Aorta (tissue), 5 donors: ENCODE measurements at regions of chr12 and their contacts with region 1.

Region 1: GRCh38 chr12:23197266-23197665 is 572.3 kb downstream of the ETNK1 start:
- DNase-seq: no peak
- ATAC-seq: peak; percentile 84
- H3K4me3 ChIP-seq: peak overlapping the region in 1 of 2 donors; percentile 10
- H3K27ac ChIP-seq: peak overlapping the region in 1 of 2 donors; percentile 67
- H3K4me1 ChIP-seq: peaks cover 2 to 3% of the 10 kb centered on the region in 2 donors
- H3K27me3 ChIP-seq: no peaks in the 10 kb centered on the region

Region 2: DNA sequence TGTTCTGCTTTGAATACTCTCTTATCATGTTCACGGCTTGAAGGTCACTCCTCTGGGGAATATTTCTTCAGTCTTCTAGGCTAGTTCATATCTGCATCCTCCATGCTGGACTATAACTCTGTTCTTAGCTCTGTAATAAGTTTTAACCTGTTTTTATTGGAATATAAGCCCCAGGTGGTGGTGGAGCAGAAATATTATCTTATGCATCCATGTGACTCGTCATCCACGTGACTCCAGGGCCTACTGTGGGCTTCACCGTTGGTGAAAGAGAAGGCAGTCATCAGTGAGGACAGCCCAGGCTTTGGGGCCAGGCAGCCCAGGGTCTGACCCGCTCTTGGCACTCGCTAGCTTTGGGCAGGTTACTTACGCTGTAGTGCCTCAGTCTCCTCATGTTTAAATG is 485.2 kb before region 1 on chr12:
- intact Hi-C with region 1: loop called in 1 of 2 experiments (anchors 10 kb)
- DNase-seq: no peak
- ATAC-seq: no peak
- H3K4me3 ChIP-seq: no peak overlapping the region
- H3K27ac ChIP-seq: no peak overlapping the region
- H3K4me1 ChIP-seq: peaks cover 0 to 2% of the 10 kb centered on the region in 2 donors
- H3K27me3 ChIP-seq: no peaks in the 10 kb centered on the region

Region 3: DNA sequence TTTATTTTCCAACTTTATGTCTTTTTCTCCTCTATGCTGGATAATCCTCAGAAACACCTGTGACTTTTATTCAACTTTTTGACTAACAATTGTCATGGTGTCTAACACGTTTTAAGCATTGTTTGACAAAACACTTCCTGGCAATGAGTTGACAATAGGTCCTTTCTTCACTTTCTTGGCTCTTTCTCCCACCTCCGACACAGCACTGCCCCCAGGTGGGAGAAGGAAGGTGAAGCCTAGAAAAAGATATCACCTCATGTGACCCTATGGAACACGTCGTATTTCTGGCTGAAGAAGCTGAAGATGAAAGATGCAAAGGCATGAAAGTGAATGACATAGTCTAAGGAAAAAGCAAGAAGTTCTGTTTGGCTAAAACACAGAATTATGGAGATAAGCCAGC is 142.3 kb before region 1 on chr12:
- intact Hi-C with region 1: no loop called
- DNase-seq: no peak
- ATAC-seq: no peak
- H3K4me3 ChIP-seq: no peak overlapping the region
- H3K27ac ChIP-seq: no peak overlapping the region
- H3K4me1 ChIP-seq: no peaks in the 10 kb centered on the region
- H3K27me3 ChIP-seq: no peaks in the 10 kb centered on the region

Region 4: GRCh38 chr12:23083267-23083666 is 114.0 kb before region 1 on chr12:
- intact Hi-C with region 1: loop called in 1 of 2 experiments (anchors 10 kb)
- DNase-seq: no peak
- ATAC-seq: no peak
- H3K4me3 ChIP-seq: no peak overlapping the region
- H3K27ac ChIP-seq: no peak overlapping the region
- H3K4me1 ChIP-seq: peaks cover 0 to 2% of the 10 kb centered on the region in 2 donors
- H3K27me3 ChIP-seq: no peaks in the 10 kb centered on the region